Mammary epithelial cell (primary cell): ENCODE measurements at regions of chrX and their contacts with region 1.

Region 1: DNA sequence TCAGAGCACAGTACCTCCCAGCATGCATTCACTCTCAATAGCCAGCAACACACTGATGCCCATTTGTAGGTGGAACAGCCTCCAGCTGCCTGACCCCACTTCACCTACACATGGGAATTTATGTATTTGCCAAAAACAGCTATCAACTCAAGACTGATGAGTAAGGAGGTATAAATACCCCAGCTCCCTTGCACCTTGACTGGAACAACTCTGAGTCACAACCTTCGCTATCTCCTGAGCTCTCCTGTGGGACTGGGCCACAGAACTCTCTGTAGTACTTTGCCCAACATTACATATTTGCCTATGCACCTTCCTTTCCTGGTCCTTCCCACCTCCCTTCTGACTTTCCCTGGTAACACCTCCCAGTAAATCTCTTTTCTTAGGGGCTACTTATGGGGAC is 16.5 kb upstream of the EGFL6 start:
- DNase-seq: no peak
- H3K4me3 ChIP-seq: no peak overlapping the region
- H3K27ac ChIP-seq: no peak overlapping the region
- H3K4me1 ChIP-seq: no peaks in the 10 kb centered on the region
- H3K27me3 ChIP-seq: peaks cover 3% of the 10 kb centered on the region
- CTCF ChIP-seq: no peak

Region 2: GRCh38 chrX:13598877-13599276 is 46.0 kb after region 1 on chrX:
- CTCF ChIA-PET with region 1: interaction called, 12 read pairs
- dilution Hi-C with region 1: no loop called
- in situ Hi-C with region 1: no loop called
- intact Hi-C with region 1: no loop called
- DNase-seq: peak; percentile 9
- H3K4me3 ChIP-seq: no peak overlapping the region
- H3K27ac ChIP-seq: no peak overlapping the region
- H3K4me1 ChIP-seq: no peaks in the 10 kb centered on the region
- H3K27me3 ChIP-seq: peaks cover 7% of the 10 kb centered on the region
- CTCF ChIP-seq: peak; percentile 56 to 60